Gastrocnemius medialis (tissue), 4 donors: ENCODE measurements at regions of chr6 and their contacts with region 1.

Region 1: GRCh38 chr6:33014841-33015634 is 5.6 kb upstream of the HLA-DOA start:
- DNase-seq: no peak
- ATAC-seq: peak; percentile 72
- H3K4me3 ChIP-seq: no peak overlapping the region
- H3K27ac ChIP-seq: peak overlapping the region in 3 of 4 donors; percentile 35 to 62 (median 40)
- H3K4me1 ChIP-seq: peaks cover 11 to 12% of the 10 kb centered on the region in 2 donors
- H3K27me3 ChIP-seq: peaks cover 0 to 5% (median 5%) of the 10 kb centered on the region in 3 donors
- CTCF ChIP-seq: peak; percentile 69 to 84 (median 81)
- POLR2A ChIP-seq: no peak

Region 2: DNA sequence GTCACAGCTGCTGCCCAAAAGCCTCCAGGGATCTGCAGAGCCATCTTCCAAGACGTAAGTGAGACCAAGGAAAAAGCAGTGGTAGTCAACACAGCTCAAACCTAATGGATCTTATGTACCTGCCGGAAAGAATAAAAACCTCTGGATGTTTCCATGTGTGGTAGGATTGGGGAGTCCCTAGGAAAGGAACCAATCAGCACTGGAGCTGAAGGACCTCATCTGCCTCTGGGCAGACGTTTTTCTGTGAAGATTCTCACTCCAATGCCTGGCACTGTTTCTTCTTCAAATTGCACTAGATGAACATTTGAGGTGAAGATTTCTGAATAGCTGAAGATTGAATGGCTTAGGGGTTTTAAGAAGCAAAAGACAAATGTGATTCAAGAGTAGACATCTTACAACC is 251.6 kb before region 1 on chr6 and contains the start of gene HLA-DQB2:
- in situ Hi-C with region 1: no loop called
- intact Hi-C with region 1: no loop called
- DNase-seq: no peak
- ATAC-seq: no peak
- H3K4me3 ChIP-seq: no peak within 1 kb of the TSS
- H3K27ac ChIP-seq: no peak within 1 kb of the TSS
- H3K4me1 ChIP-seq: no peaks in the 10 kb centered on the region
- H3K27me3 ChIP-seq: peaks cover 3 to 8% (median 8%) of the 10 kb centered on the region in 3 donors
- CTCF ChIP-seq: no peak
- POLR2A ChIP-seq: no peak
- total RNA-seq, gene HLA-DQB2: 0.66 to 0.78 TPM in 2 of 4 donors, not detected in the others

Region 3: DNA sequence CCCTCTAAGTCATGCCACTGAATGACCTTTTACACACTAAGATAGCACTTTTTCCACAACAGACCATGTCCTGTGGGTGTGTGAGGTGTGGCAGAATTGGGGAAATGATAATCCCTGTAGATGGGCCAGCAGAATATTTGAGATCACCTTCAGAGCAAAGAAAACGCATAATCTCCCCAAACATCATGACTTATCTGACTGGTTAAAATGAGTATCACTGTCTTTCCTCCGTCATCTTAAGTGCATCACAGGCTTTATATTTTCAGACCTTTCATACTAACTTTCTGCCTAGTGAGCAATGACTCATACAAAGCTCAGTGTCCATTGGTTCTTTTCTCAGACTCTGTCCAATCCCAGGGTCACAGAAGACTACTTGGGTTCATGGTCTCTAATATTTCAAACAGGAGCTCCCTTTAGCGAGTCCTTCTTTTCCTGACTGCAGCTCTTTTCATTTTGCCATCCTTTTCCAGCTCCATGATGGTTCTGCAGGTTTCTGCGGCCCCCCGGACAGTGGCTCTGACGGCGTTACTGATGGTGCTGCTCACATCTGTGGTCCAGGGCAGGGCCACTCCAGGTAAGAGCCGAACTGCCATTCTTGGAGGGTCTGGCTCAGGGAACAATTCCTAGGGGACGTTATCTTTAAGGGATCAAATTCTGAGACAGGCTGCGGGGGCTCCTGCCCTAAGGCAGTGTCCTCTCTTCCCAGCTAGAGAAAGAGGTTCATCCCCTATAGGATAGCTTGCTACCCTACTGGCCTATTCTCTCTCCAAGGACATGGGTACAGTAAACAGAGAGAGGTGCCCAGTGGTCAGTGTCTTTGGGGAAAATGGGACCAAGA is 60.7 kb after region 1 on chr6 and contains the start of gene HLA-DPB1:
- in situ Hi-C with region 1: loop called in 3 of 4 experiments (anchors 5 to 10 kb)
- intact Hi-C with region 1: loop called (anchors 5 kb)
- DNase-seq: no peak
- ATAC-seq: peak; percentile 88 to 95
- H3K4me3 ChIP-seq: peak within 1 kb of the TSS; percentile 16 to 55 (median 47)
- H3K27ac ChIP-seq: peak within 1 kb of the TSS; percentile 69 to 78 (median 77)
- H3K4me1 ChIP-seq: no peaks in the 10 kb centered on the region
- H3K27me3 ChIP-seq: peaks cover 2 to 14% (median 6%) of the 10 kb centered on the region in 3 donors
- CTCF ChIP-seq: no peak
- POLR2A ChIP-seq: peak; percentile 32 to 60
- total RNA-seq, gene HLA-DPB1: 16.7 to 52.1 (median 23.5) TPM

Region 4: GRCh38 chr6:33082702-33083101 is 67.7 kb after region 1 on chr6:
- in situ Hi-C with region 1: loop called in 3 of 4 experiments (anchors 5 to 10 kb)
- intact Hi-C with region 1: loop called (anchors 5 kb)
- DNase-seq: no peak
- ATAC-seq: peak in 1 of 2 donors; percentile 66
- H3K4me3 ChIP-seq: no peak overlapping the region
- H3K27ac ChIP-seq: no peak overlapping the region
- H3K4me1 ChIP-seq: peaks cover 0 to 5% of the 10 kb centered on the region in 2 donors
- H3K27me3 ChIP-seq: peaks cover 2 to 14% (median 6%) of the 10 kb centered on the region in 3 donors
- CTCF ChIP-seq: peak in 4 of 5 experiments; percentile 18 to 72 (median 54)
- POLR2A ChIP-seq: no peak

Region 5: DNA sequence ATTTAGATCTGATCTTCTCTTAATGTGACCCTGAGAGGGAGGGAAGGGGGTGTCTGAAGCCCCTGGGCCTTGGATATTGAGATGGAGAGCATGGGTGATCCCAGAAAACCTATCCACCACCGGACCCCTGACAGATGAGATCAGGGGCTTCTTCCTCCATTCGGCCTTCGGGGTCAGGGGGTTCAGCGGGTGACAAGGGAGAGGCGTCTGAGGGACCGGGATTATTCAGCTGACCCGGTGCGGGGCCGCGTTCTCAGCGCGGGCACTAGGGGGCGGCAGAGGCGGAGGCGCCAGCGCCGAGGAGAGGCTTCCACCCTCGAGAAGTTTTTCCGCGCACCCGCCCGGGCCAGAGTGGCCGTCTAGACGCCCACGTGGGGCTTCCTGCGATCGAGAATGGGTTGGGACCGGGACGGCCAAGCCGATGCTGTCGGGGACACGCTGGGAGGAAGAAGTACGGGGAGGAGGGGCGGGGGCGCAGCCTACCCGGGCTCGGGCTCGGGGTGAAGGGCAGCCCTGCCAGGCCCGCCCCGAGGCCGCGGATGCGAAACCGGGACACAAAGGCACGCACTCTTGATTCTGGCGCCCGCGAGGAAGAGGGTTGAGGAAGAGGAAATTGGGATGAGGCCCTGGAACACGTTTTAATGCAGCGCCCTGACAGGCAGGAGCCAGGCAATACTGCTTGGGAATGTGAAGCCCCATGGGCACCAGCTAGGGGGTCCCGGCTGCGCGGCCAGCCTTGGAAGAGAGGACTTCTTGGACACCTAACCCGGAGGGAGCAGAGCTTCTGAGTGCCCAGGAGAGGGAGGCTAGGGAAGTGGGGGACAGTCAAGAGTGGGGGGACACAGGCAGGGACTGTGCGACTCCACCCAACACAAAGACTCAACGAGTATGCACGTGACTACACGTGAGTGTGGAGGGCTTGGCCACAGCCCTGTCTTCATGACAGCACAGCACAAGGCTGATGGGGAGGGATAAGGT is 146.6 kb after region 1 on chr6:
- in situ Hi-C with region 1: no loop called
- intact Hi-C with region 1: loop called (anchors 10 kb)
- DNase-seq: peak; percentile 34 to 70
- ATAC-seq: peak; percentile 88 to 94
- H3K4me3 ChIP-seq: peak overlapping the region; percentile 52 to 77 (median 62)
- H3K27ac ChIP-seq: peak overlapping the region in 2 of 4 donors; percentile 15 to 41
- H3K4me1 ChIP-seq: peaks cover 0 to 6% of the 10 kb centered on the region in 2 donors
- H3K27me3 ChIP-seq: no peaks in the 10 kb centered on the region
- CTCF ChIP-seq: peak; percentile 76 to 97 (median 94)
- POLR2A ChIP-seq: no peak